CD8-positive, alpha-beta memory T cell (primary cell): ENCODE measurements at regions of chr1 and their contacts with region 1.

Region 1: DNA sequence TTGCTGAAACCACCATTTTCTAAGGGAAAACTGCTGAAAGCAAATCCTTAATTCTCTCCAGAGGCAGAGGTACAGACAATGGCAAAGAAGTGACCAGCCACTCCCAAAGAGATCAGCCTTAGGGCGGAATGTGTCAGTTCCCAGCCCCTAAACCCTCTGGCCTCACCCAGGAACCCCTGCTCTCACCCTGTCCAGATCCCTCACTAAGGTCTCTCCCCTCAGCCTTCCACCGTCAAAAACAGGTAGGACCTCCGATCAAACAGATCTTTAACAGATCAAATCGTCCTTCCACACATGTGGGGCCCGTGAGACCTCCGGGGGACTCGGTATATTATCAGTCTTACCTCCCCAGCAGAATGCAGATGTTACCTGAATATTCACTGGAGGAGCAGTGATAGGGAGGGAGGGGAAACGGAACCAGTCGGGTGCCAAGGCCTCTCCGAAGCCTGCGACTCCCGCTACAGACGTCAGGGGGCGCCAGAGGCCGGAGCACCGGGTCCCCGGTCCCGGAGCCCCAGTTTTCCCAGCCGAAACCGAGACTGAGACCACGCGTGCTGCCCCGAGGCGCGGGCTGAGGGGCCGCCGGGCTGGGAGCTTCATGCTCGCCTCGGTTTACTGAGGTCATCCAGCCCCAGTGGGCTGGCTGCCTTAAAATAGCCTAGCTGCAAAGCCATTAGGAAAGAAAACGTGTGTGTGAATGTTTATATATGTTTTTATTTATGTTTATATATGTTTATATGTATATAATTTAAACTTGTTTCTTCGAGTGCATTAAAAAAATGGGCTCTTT is 23.6 kb downstream of the GPA33 start:
- DNase-seq: peak; percentile 66 to 81 (median 74)
- H3K4me3 ChIP-seq: no peak overlapping the region
- H3K4me3 Mint-ChIP-seq: peak overlapping the region in 2 of 7 donors; percentile 37 to 49
- H3K27ac ChIP-seq: no peak overlapping the region
- H3K27ac Mint-ChIP-seq: no peak overlapping the region
- H3K4me1 ChIP-seq: no peaks in the 10 kb centered on the region
- H3K4me1 Mint-ChIP-seq: peaks cover 0 to 5% (median 3%) of the 10 kb centered on the region in 3 donors
- H3K27me3 ChIP-seq: no peaks in the 10 kb centered on the region
- H3K27me3 Mint-ChIP-seq: peaks cover 0 to 4% of the 10 kb centered on the region in 2 donors

Region 2: DNA sequence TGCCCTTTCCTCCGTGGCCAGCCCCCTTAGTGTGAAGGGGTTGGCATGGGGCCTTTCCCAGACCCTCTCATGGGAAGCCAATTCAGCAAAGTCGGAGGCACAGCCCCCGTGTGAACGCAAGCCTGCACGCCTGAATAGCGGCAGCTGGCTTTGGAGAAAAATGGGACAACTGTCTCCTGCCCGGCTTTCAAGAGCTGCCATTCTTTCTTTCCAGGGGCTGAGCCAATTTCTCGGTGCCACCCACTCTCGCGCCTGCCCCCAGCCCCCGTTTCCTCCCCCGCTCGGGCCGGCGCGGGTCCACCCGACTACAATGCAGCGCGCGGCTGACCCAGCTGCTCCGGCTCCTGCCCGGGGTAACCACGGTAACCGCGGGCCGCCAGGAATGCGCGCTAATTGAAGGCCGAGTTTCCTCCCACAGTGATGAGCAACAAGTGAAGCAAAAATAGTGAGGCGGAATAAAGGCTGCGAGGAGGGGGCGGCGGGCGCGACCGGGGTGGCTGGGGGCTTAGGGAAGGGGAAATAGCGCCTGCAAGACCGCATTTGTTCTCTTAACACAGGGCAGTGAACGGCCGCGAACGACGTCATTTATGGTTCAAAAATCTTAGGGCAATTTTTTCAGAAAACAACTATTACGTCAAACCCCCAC is 119.0 kb before region 1 on chr1:
- CTCF ChIA-PET with region 1: no interaction called
- POLR2A ChIA-PET with region 1: no interaction called
- DNase-seq: peak in 1 of 5 donors; percentile 9
- H3K4me3 ChIP-seq: no peak overlapping the region
- H3K4me3 Mint-ChIP-seq: peak overlapping the region in 1 of 7 donors; percentile 52
- H3K27ac ChIP-seq: no peak overlapping the region
- H3K27ac Mint-ChIP-seq: no peak overlapping the region
- H3K4me1 ChIP-seq: peaks cover 7% of the 10 kb centered on the region
- H3K4me1 Mint-ChIP-seq: peaks cover 2 to 21% (median 12%) of the 10 kb centered on the region in 3 donors
- H3K27me3 ChIP-seq: peaks cover 9% of the 10 kb centered on the region
- H3K27me3 Mint-ChIP-seq: peaks cover 22 to 58% of the 10 kb centered on the region in 2 donors

Region 3: GRCh38 chr1:167121375-167122120 is 55.0 kb after region 1 on chr1:
- CTCF ChIA-PET with region 1: interaction called, 134 read pairs
- POLR2A ChIA-PET with region 1: no interaction called
- DNase-seq: peak in 2 of 5 donors; percentile 11 to 41
- H3K4me3 ChIP-seq: peak overlapping the region; percentile 74
- H3K4me3 Mint-ChIP-seq: peak overlapping the region; percentile 27 to 87 (median 83)
- H3K27ac ChIP-seq: no peak overlapping the region
- H3K27ac Mint-ChIP-seq: peak overlapping the region in 3 of 8 donors; percentile 64 to 87 (median 81)
- H3K4me1 ChIP-seq: peaks cover 4% of the 10 kb centered on the region
- H3K4me1 Mint-ChIP-seq: peaks cover 0 to 10% (median 0%) of the 10 kb centered on the region in 3 donors
- H3K27me3 ChIP-seq: no peaks in the 10 kb centered on the region
- H3K27me3 Mint-ChIP-seq: peaks cover 4 to 26% of the 10 kb centered on the region in 2 donors